Ovary (tissue), 10 donors: ENCODE measurements at regions of chr22 and their contacts with region 1.

Region 1: GRCh38 chr22:41358927-41359326 is 22.8 kb upstream of the TEF start:
- DNase-seq: no peak
- H3K4me3 ChIP-seq: no peak overlapping the region
- H3K27ac ChIP-seq: no peak overlapping the region
- H3K4me1 ChIP-seq: no peaks in the 10 kb centered on the region
- H3K27me3 ChIP-seq: no peaks in the 10 kb centered on the region
- CTCF ChIP-seq: no peak
- EP300 ChIP-seq: no peak
- POLR2A ChIP-seq: no peak

Region 2: DNA sequence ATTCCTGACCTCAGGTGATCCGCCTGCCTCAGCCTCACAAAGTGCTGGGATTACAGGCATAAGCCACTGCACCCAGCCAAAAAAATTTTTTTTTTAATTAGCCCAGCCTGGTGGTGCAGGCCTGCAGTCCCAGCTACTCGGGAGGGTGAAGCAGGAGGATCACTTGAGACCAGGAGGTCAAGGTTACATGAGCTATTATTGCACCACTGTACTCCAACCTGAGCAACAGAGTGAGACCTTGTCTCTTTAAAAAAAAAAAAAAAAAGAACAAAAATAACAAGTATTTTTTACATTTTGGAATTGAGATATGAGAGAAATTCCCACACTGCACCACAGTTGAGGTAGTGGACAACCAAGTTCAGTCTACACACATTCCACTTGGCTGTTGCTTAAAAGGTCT is 167.5 kb before region 1 on chr22:
- intact Hi-C with region 1: no loop called
- DNase-seq: peak in 1 of 5 donors; percentile 5
- H3K4me3 ChIP-seq: no peak overlapping the region
- H3K27ac ChIP-seq: no peak overlapping the region
- H3K4me1 ChIP-seq: peaks cover 6% of the 10 kb centered on the region
- H3K27me3 ChIP-seq: no peaks in the 10 kb centered on the region
- CTCF ChIP-seq: no peak
- EP300 ChIP-seq: no peak
- POLR2A ChIP-seq: no peak

Region 3: GRCh38 chr22:41301105-41302020 is 57.6 kb before region 1 on chr22 and contains the start of gene ZC3H7B:
- intact Hi-C with region 1: loop called in 1 of 4 experiments (anchors 5 kb)
- DNase-seq: peak; percentile 77 to 86 (median 82)
- H3K4me3 ChIP-seq: peak within 1 kb of the TSS; percentile 86
- H3K27ac ChIP-seq: peak within 1 kb of the TSS; percentile 85 to 97
- H3K4me1 ChIP-seq: peaks cover 6% of the 10 kb centered on the region
- H3K27me3 ChIP-seq: no peaks in the 10 kb centered on the region
- CTCF ChIP-seq: peak; percentile 29 to 63 (median 46)
- EP300 ChIP-seq: no peak
- POLR2A ChIP-seq: no peak
- total RNA-seq, gene ZC3H7B: 27.3 to 96.5 (median 88.0) TPM

Region 4: DNA sequence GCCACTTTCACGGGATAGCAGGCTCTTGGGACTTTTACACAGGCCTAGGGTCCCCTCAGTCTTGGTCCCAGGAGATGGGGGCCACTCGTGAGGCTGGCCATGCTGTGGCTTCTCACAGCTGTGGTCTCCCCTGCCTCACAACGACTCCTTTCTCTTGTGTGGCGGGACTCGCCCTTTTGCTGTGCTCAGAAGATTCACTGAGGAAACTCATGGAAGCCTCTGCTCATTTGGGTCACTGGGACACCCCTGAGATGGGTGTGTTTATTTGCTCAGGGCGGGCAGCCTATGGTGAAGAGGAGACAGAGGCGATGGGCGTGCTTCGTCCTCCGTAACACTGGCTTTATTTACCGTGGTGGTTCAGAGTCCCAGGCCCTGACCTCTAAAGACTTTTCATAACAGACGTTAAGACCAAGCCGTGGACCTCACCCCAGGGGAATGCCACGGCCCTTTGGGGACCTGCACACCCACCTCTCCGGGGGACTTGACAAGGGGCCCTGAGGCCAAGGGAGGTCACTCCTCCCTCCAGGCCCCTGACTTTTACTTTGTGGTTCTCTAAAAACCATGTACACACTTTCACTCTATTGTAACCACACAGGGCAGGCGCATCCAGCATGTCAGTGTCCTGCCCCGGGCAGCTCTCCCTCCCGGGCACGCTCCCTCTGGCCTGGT is 38.4 kb after region 1 on chr22:
- intact Hi-C with region 1: no loop called
- DNase-seq: no peak
- H3K4me3 ChIP-seq: no peak overlapping the region
- H3K27ac ChIP-seq: no peak overlapping the region
- H3K4me1 ChIP-seq: peaks cover 6% of the 10 kb centered on the region
- H3K27me3 ChIP-seq: no peaks in the 10 kb centered on the region
- CTCF ChIP-seq: no peak
- EP300 ChIP-seq: no peak
- POLR2A ChIP-seq: no peak